ENCODE measurements at regions of chr6 and their contacts with region 1.

Region 1: DNA sequence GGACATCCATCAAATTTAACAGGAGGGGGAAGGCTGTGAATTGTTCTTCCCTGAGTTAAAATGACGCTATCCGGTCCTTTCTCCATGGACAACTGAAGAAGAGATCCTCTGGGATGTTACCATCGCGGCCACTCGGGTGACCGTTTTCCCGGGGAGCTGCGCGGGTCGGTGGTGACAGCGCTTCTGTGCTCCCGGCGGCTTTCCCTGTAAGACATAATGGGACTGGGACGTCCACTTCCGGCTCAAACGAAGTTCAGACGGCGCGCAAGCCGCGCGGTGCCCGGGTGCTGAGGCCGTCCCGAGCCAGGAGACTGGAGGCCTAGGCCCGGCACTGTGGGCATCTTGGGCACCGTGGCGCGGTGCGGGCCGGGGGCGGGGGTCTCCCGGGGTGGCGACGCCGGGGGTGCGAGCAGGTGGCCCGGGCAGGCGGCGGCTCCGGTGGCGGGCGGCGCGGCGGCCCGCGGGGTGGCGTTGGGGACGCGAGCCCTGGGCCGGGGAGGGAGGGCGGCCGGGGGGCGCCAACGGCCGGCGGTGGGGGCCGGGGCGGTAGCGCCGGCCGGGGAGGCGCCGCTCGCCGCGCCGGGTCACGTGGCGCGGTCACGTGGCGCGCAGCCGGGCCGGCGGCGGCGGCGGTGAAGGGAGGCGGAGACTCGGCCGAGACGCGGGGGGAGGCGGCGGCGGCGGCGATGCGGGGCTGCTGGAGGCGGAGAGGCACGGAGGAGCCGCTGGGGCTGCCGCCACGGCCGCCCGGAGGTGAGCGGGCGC is 63.6 kb downstream of the GTF2H5 start:
- DNase-seq: peak; percentile 68
- H3K4me3 Mint-ChIP-seq: peak overlapping the region; percentile 89
- H3K27ac Mint-ChIP-seq: peak overlapping the region; percentile 85
- H3K4me1 Mint-ChIP-seq: peaks cover 20% of the 10 kb centered on the region
- H3K27me3 Mint-ChIP-seq: peaks cover 11% of the 10 kb centered on the region

Region 2: GRCh38 chr6:158270389-158271127 is 38.8 kb after region 1 on chr6:
- intact Hi-C with region 1: loop called (anchors 2 kb)
- DNase-seq: no peak
- H3K4me3 Mint-ChIP-seq: no peak overlapping the region
- H3K27ac Mint-ChIP-seq: peak overlapping the region; percentile 49
- H3K4me1 Mint-ChIP-seq: peaks cover 25% of the 10 kb centered on the region
- H3K27me3 Mint-ChIP-seq: no peaks in the 10 kb centered on the region

Region 3: DNA sequence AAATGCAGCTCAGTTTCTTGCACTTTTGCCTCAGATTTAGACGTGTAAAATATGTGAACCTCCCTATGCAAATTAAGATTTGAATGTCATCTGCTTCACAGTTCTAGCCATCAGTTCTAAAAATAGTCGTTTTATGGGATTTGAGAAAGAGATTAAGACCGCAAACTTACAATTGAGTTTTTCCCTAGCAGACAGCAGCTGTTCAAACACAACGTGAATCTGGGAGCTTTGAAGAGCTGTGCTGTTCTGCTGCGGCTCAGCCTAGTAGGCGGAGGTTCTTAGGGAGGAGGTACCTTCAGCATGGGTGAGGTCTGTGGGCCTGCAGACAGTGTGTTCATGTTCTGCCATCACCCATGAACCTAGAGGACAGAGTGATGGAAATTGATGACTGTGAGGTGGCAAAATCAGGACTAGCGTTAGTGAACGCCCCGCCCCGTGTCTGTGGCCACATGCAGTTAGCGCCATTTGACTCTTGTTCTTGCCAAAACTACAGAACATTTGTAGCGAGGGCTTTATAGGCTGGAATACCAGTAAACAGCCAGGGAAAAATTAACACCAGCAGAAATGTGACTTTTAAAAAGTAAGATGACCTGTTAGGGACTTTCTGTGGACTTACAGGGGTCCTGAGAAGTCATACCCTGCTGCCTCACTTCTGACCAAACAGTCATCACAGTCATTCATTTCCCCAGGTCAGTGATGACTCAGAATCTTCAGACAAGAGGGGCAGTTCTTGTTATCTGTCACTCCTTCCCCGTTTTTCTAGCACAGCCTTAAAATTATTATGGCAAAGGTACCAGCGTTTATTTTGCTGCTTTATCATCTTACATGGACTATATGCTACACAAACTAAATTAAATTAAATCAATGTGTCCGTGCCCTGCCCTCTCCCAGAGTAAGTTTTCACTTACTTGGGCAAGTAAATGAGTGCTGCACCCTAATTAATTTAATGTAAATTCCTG is 243.9 kb after region 1 on chr6:
- intact Hi-C with region 1: no loop called
- DNase-seq: no peak
- H3K4me3 Mint-ChIP-seq: no peak overlapping the region
- H3K27ac Mint-ChIP-seq: no peak overlapping the region
- H3K4me1 Mint-ChIP-seq: no peaks in the 10 kb centered on the region
- H3K27me3 Mint-ChIP-seq: no peaks in the 10 kb centered on the region